Natural killer cell (primary cell): ENCODE measurements at regions of chr11 and their contacts with region 1.

Region 1: DNA sequence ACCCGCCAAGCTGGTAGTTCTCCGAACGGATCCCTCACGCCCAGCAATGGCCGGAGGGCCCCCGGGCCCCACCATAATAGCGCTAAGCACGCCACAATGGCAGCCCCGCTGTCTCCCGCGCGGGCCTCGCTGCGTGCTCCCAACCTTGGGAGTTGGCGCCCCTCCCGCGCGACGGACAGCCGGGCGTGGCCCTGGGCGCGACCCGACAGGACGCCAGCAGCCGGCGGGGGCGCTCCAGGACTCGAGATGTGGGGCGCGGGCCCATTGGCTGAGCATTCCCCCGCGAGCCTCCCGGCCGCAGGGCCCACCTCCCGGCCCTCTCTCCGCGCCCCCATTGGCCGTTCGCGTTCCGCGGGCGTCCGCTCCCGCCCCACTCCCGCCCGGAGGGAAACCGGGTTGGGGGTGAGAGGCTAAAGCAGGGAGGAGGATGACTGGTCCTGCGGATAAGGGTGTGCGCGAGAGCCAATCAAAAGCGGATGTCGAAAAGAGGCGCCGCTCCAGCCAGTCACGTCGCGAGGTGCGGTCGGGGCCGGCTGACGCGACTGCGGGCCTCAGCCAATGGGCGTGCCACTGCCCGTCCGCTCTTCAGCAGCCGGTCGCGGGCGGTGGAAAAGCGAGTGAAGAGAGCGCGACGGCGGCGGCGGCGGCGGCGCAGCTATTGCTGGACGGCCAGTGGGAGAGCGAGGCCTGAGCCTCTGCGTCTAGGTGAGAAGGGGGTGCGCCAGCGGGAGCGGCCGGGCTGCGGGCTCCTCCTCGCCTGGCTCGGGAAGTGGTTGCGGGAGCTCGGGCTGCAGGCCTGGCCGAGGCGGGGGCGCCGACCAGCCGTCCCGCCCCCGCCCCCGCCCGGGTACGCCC is at the start of gene FAR1:
- DNase-seq: peak; percentile 94 to 97
- ATAC-seq: peak; percentile 85 to 96 (median 86)
- H3K4me3 ChIP-seq: peak within 1 kb of the TSS; percentile 81
- H3K4me3 Mint-ChIP-seq: peak within 1 kb of the TSS; percentile 99
- H3K27ac ChIP-seq: peak within 1 kb of the TSS; percentile 78
- H3K27ac Mint-ChIP-seq: peak within 1 kb of the TSS; percentile 88 to 97
- H3K4me1 ChIP-seq: peaks cover 20% of the 10 kb centered on the region
- H3K4me1 Mint-ChIP-seq: peaks cover 40 to 52% of the 10 kb centered on the region in 2 donors
- H3K27me3 ChIP-seq: no peaks in the 10 kb centered on the region
- H3K27me3 Mint-ChIP-seq: peaks cover 0 to 8% of the 10 kb centered on the region in 2 donors
- CTCF ChIP-seq: peak; percentile 58
- total RNA-seq, gene FAR1: 59.5 to 74.7 (median 74.6) TPM

Region 2: GRCh38 chr11:13462901-13463778 is 205.2 kb before region 1 on chr11 and contains the start of gene BTBD10:
- intact Hi-C with region 1: loop called (anchors 1 kb)
- DNase-seq: peak; percentile 87 to 98
- ATAC-seq: peak; percentile 98 to 100 (median 99)
- H3K4me3 ChIP-seq: peak within 1 kb of the TSS; percentile 99
- H3K4me3 Mint-ChIP-seq: peak within 1 kb of the TSS; percentile 96
- H3K27ac ChIP-seq: peak within 1 kb of the TSS; percentile 88
- H3K27ac Mint-ChIP-seq: peak within 1 kb of the TSS; percentile 90 to 100
- H3K4me1 ChIP-seq: peaks cover 14% of the 10 kb centered on the region
- H3K4me1 Mint-ChIP-seq: peaks cover 47 to 49% of the 10 kb centered on the region in 2 donors
- H3K27me3 ChIP-seq: no peaks in the 10 kb centered on the region
- H3K27me3 Mint-ChIP-seq: peaks cover 0 to 4% of the 10 kb centered on the region in 2 donors
- CTCF ChIP-seq: no peak
- total RNA-seq, gene BTBD10: 18.0 to 26.9 (median 23.2) TPM

Region 3: GRCh38 chr11:13550761-13551160 is 117.6 kb before region 1 on chr11:
- intact Hi-C with region 1: loop called (anchors 1 kb)
- DNase-seq: peak; percentile 31 to 52
- ATAC-seq: peak; percentile 92 to 99 (median 95)
- H3K4me3 ChIP-seq: no peak overlapping the region
- H3K4me3 Mint-ChIP-seq: peak overlapping the region; percentile 81
- H3K27ac ChIP-seq: peak overlapping the region; percentile 27
- H3K27ac Mint-ChIP-seq: peak overlapping the region; percentile 88
- H3K4me1 ChIP-seq: peaks cover 47% of the 10 kb centered on the region
- H3K4me1 Mint-ChIP-seq: peaks cover 69 to 72% of the 10 kb centered on the region in 2 donors
- H3K27me3 ChIP-seq: no peaks in the 10 kb centered on the region
- H3K27me3 Mint-ChIP-seq: no peaks in the 10 kb centered on the region
- CTCF ChIP-seq: no peak

Region 4: DNA sequence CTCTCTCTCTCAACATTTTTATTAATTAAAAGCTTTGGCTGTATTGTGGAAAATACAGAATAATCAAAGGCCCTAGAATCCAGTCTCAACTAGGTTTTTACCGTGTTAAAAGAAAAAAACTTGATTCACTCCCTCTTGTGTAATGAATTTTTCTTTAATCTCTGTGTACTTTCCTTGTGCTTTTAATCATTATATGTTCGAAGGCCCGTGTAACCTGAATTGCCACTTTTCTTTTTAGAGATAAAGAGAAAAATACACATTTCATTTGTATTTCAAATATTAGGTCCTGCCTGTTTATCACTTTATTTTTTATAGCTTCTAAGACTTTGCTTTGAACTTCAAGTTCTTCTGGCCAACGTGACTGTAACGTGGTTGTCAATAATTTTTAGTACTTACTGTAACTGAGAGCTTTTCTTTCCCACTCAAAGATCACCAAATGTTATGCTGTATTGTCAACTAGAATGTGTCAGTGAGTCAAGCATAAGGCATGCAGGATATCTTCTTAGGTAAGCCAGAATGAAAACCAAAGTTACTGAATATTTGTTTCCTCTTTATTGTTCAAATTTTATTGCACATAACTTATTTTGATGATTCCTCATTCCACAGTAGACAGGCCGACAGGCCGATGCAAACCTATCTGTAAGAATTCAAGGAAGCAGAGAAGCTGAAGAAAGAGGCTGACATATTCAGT is 23.2 kb before region 1 on chr11:
- intact Hi-C with region 1: no loop called
- DNase-seq: no peak
- ATAC-seq: no peak
- H3K4me3 ChIP-seq: no peak overlapping the region
- H3K4me3 Mint-ChIP-seq: no peak overlapping the region
- H3K27ac ChIP-seq: no peak overlapping the region
- H3K27ac Mint-ChIP-seq: no peak overlapping the region
- H3K4me1 ChIP-seq: no peaks in the 10 kb centered on the region
- H3K4me1 Mint-ChIP-seq: peaks cover 6 to 8% of the 10 kb centered on the region in 2 donors
- H3K27me3 ChIP-seq: peaks cover 3% of the 10 kb centered on the region
- H3K27me3 Mint-ChIP-seq: peaks cover 10 to 43% of the 10 kb centered on the region in 2 donors
- CTCF ChIP-seq: no peak